ENCODE measurements at regions of chr2 and their contacts with region 1.

Region 1: GRCh38 chr2:47344890-47345589 is 57.9 kb upstream of the MSH2 start:
- DNase-seq: peak; percentile 66 to 86
- H3K4me3 ChIP-seq: peak overlapping the region; percentile 15 to 64 (median 51)
- H3K27ac ChIP-seq: peak overlapping the region; percentile 91 to 92
- H3K4me1 ChIP-seq: peaks cover 0 to 5% of the 10 kb centered on the region in 2 donors
- H3K27me3 ChIP-seq: no peaks in the 10 kb centered on the region
- CTCF ChIP-seq: peak in 2 of 3 donors; percentile 37 to 59
- POLR2A ChIP-seq: peak; percentile 7

Region 2: GRCh38 chr2:47303341-47304148 is 41.5 kb before region 1 on chr2:
- intact Hi-C with region 1: loop called (anchors 2 kb)
- DNase-seq: no peak
- H3K4me3 ChIP-seq: no peak overlapping the region
- H3K27ac ChIP-seq: no peak overlapping the region
- H3K4me1 ChIP-seq: peaks cover 0 to 6% of the 10 kb centered on the region in 2 donors
- H3K27me3 ChIP-seq: no peaks in the 10 kb centered on the region
- CTCF ChIP-seq: no peak
- POLR2A ChIP-seq: no peak

Region 3: DNA sequence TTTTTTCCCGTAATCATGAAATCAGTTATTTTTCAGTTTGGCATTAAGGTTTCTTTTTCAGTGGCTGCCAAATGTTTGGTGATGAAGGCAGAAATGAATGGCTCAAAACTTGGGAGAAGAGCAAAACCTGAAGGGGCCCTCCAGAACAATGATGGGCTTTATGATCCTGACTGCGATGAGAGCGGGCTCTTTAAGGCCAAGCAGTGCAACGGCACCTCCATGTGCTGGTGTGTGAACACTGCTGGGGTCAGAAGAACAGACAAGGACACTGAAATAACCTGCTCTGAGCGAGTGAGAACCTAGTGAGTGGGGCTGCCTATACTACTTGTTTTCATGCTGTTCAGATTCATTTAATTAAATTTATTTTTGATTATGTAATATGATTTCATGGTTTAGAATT is 28.7 kb after region 1 on chr2:
- intact Hi-C with region 1: no loop called
- DNase-seq: no peak
- H3K4me3 ChIP-seq: no peak overlapping the region
- H3K27ac ChIP-seq: no peak overlapping the region
- H3K4me1 ChIP-seq: no peaks in the 10 kb centered on the region
- H3K27me3 ChIP-seq: peaks cover 0 to 6% of the 10 kb centered on the region in 2 donors
- CTCF ChIP-seq: no peak
- POLR2A ChIP-seq: no peak

Region 4: DNA sequence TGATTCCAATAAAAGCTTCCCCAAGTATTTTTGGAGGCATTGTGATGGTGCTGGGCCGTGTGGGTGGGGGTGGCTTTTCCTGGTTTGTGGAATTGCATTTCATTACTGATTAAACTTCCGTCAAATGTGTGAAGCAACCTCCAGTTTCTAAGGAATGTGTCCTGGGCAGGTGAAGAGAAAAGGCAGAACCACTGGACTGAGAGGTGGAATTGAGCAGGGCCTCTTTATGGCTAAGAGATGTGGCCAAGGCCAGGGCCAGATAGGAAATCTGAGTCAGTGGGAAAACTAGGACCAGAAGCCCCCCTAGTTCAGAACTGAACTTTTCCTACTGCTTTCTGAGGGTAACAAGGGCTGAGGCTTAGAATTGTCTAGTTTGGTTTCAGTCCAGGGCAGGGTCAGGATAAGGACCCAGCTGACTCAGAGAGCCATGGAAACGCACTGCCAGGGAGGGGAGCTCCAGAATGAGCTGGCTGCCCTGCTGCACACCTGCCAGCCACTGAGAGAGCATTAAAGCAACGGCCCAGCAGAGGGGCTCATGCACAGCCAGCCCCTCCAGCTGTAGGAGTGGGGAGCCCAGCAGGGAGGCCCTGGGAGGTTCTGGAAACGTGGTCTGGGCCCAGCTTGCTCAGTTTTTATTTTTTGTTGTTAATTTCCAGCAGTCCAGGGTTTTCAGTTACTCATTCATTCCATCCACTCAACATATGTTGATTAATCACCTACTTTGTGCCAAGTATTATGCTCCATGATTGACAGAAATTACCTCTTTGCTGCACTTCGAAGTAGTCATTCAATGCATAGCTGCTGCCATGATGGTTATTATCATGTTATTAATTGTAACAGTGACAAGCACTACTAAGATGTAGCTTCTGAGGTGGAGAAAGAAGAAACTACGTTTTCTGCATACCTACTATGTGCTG is 214.0 kb after region 1 on chr2:
- intact Hi-C with region 1: no loop called
- DNase-seq: no peak
- H3K4me3 ChIP-seq: no peak overlapping the region
- H3K27ac ChIP-seq: no peak overlapping the region
- H3K4me1 ChIP-seq: no peaks in the 10 kb centered on the region
- H3K27me3 ChIP-seq: no peaks in the 10 kb centered on the region
- CTCF ChIP-seq: no peak
- POLR2A ChIP-seq: no peak

Region 5: GRCh38 chr2:48219555-48220436 is 874.8 kb after region 1 on chr2:
- intact Hi-C with region 1: no loop called
- DNase-seq: no peak
- H3K4me3 ChIP-seq: no peak overlapping the region
- H3K27ac ChIP-seq: no peak overlapping the region
- H3K4me1 ChIP-seq: no peaks in the 10 kb centered on the region
- H3K27me3 ChIP-seq: no peaks in the 10 kb centered on the region
- CTCF ChIP-seq: no peak
- POLR2A ChIP-seq: no peak

Measured in breast epithelium (tissue), 4 donors.